Activated naive CD4-positive, alpha-beta T cell treated with anti-CD3 and anti-CD28 coated beads for 36 hours (primary cell): ENCODE measurements at regions of chr4 and their contacts with region 1.

Region 1: GRCh38 chr4:56681158-56681852 is at the start of gene HOPX:
- DNase-seq: peak; percentile 82
- H3K4me3 Mint-ChIP-seq: peak within 1 kb of the TSS; percentile 16
- H3K27ac Mint-ChIP-seq: no peak within 1 kb of the TSS
- H3K4me1 Mint-ChIP-seq: peaks cover 23% of the 10 kb centered on the region
- H3K27me3 Mint-ChIP-seq: peaks cover 34% of the 10 kb centered on the region
- total RNA-seq, gene HOPX: 14.0 to 14.7 TPM

Region 2: GRCh38 chr4:56641494-56642051 is 39.7 kb before region 1 on chr4:
- CTCF ChIA-PET with region 1: no interaction called
- intact Hi-C with region 1: loop called (anchors 1 kb)
- DNase-seq: no peak
- H3K4me3 Mint-ChIP-seq: no peak overlapping the region
- H3K27ac Mint-ChIP-seq: peak overlapping the region; percentile 60
- H3K4me1 Mint-ChIP-seq: peaks cover 17% of the 10 kb centered on the region
- H3K27me3 Mint-ChIP-seq: peaks cover 8% of the 10 kb centered on the region

Region 3: GRCh38 chr4:56696056-56696455 is 14.8 kb after region 1 on chr4:
- CTCF ChIA-PET with region 1: no interaction called
- intact Hi-C with region 1: loop called (anchors 2 kb)
- DNase-seq: no peak
- H3K4me3 Mint-ChIP-seq: no peak overlapping the region
- H3K27ac Mint-ChIP-seq: no peak overlapping the region
- H3K4me1 Mint-ChIP-seq: no peaks in the 10 kb centered on the region
- H3K27me3 Mint-ChIP-seq: peaks cover 5% of the 10 kb centered on the region

Region 4: DNA sequence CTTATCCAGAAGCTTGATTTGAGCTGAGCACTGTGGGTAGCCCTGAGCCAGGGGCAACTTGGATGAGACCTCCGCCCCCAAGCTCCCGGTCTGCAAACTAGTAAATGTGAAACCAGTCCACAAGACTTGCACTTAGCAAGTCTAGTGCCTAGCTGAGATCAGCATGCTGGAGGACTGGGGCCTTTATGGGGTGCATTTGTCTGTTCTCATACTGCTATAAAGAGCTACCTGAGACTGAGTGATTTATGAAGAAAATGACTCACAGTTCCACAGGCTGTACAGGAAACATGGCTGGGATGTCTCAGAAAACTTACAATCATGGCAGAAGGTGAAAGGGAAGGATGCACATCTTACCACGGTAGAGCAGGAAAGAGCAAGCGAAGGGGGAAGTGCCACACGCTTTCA is 41.9 kb after region 1 on chr4:
- CTCF ChIA-PET with region 1: interaction called, 4 read pairs
- intact Hi-C with region 1: loop called (anchors 1 kb)
- DNase-seq: peak; percentile 79
- H3K4me3 Mint-ChIP-seq: no peak overlapping the region
- H3K27ac Mint-ChIP-seq: peak overlapping the region; percentile 69
- H3K4me1 Mint-ChIP-seq: peaks cover 15% of the 10 kb centered on the region
- H3K27me3 Mint-ChIP-seq: no peaks in the 10 kb centered on the region

Region 5: GRCh38 chr4:56757821-56758411 is 76.6 kb after region 1 on chr4:
- CTCF ChIA-PET with region 1: no interaction called
- intact Hi-C with region 1: loop called (anchors 1 kb)
- DNase-seq: peak; percentile 92
- H3K4me3 Mint-ChIP-seq: peak overlapping the region; percentile 57
- H3K27ac Mint-ChIP-seq: peak overlapping the region; percentile 89
- H3K4me1 Mint-ChIP-seq: peaks cover 26% of the 10 kb centered on the region
- H3K27me3 Mint-ChIP-seq: no peaks in the 10 kb centered on the region

Region 6: GRCh38 chr4:56821381-56822243 is 140.3 kb after region 1 on chr4 and contains the start of gene SPINK2:
- CTCF ChIA-PET with region 1: no interaction called
- intact Hi-C with region 1: loop called (anchors 1 kb)
- DNase-seq: peak; percentile 75
- H3K4me3 Mint-ChIP-seq: peak within 1 kb of the TSS; percentile 74
- H3K27ac Mint-ChIP-seq: no peak within 1 kb of the TSS
- H3K4me1 Mint-ChIP-seq: peaks cover 25% of the 10 kb centered on the region
- H3K27me3 Mint-ChIP-seq: peaks cover 12% of the 10 kb centered on the region
- total RNA-seq, gene SPINK2: 0.83 to 1.4 TPM